Psoas muscle (tissue), 8 donors: ENCODE measurements at regions of chr3 and their contacts with region 1.

Region 1: DNA sequence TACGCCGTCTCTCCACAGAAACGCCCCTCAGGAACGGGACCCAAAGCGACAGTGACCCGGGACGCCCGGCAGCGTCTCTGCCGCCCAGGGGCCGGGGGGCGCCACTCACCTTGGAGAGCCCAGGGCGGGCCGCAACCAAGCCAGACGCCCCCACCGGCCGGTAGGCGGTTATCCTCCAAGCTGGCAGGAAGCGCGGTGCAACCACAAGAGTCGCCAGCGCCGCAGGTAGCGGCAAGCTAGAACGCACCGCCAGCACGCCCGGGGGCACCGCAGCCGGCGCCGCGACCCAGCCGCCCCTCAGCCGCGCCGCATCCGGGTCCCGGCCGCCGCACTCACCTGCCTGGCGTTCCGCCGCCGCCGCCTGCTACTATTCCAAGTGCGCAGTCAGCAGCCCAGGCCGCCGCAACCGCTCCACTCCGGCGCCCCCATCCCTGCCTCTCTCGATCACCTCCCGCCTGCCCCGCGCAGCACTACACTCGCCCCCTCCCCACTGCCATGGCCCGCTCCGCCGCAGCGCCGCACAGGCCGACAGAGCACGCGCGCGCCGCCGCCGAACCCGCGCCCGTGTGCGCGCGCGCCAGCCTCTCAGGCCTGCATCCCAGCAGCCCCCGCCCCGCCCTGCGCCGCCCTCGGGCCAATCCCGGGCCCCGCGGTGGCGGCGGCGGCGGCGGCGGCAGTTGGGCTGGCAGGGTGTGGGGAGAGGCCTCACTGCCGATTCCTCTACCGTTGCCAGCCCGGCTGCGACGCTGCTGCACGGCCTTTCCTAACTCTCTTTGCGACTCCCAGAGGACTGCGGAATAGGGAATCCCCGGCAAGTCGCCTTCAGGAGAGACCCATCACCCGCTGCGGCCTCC is at the start of gene PIK3CB:
- DNase-seq: peak; percentile 93 to 96
- ATAC-seq: peak; percentile 90 to 96 (median 95)
- H3K4me3 ChIP-seq: peak within 1 kb of the TSS; percentile 94
- H3K27ac ChIP-seq: peak within 1 kb of the TSS; percentile 94
- H3K4me1 ChIP-seq: peaks cover 11% of the 10 kb centered on the region
- H3K27me3 ChIP-seq: no peaks in the 10 kb centered on the region
- CTCF ChIP-seq: peak; percentile 37
- total RNA-seq, gene PIK3CB: 14.6 to 46.3 (median 24.5) TPM

Region 2: GRCh38 chr3:138608322-138609135 is 226.1 kb before region 1 on chr3 and contains the start of gene FAIM:
- intact Hi-C with region 1: loop called (anchors 10 kb)
- DNase-seq: peak; percentile 77 to 87
- ATAC-seq: peak; percentile 82 to 85 (median 83)
- H3K4me3 ChIP-seq: peak within 1 kb of the TSS; percentile 85
- H3K27ac ChIP-seq: peak within 1 kb of the TSS; percentile 92
- H3K4me1 ChIP-seq: peaks cover 14% of the 10 kb centered on the region
- H3K27me3 ChIP-seq: no peaks in the 10 kb centered on the region
- CTCF ChIP-seq: no peak
- total RNA-seq, gene FAIM: 2.1 to 3.1 (median 2.3) TPM

Region 3: GRCh38 chr3:138774529-138775253 is 59.9 kb before region 1 on chr3:
- intact Hi-C with region 1: loop called (anchors 1 to 5 kb)
- DNase-seq: no peak
- ATAC-seq: peak; percentile 97 to 98 (median 98)
- H3K4me3 ChIP-seq: peak overlapping the region; percentile 14
- H3K27ac ChIP-seq: peak overlapping the region; percentile 83
- H3K4me1 ChIP-seq: peaks cover 25% of the 10 kb centered on the region
- H3K27me3 ChIP-seq: no peaks in the 10 kb centered on the region
- CTCF ChIP-seq: no peak

Region 4: DNA sequence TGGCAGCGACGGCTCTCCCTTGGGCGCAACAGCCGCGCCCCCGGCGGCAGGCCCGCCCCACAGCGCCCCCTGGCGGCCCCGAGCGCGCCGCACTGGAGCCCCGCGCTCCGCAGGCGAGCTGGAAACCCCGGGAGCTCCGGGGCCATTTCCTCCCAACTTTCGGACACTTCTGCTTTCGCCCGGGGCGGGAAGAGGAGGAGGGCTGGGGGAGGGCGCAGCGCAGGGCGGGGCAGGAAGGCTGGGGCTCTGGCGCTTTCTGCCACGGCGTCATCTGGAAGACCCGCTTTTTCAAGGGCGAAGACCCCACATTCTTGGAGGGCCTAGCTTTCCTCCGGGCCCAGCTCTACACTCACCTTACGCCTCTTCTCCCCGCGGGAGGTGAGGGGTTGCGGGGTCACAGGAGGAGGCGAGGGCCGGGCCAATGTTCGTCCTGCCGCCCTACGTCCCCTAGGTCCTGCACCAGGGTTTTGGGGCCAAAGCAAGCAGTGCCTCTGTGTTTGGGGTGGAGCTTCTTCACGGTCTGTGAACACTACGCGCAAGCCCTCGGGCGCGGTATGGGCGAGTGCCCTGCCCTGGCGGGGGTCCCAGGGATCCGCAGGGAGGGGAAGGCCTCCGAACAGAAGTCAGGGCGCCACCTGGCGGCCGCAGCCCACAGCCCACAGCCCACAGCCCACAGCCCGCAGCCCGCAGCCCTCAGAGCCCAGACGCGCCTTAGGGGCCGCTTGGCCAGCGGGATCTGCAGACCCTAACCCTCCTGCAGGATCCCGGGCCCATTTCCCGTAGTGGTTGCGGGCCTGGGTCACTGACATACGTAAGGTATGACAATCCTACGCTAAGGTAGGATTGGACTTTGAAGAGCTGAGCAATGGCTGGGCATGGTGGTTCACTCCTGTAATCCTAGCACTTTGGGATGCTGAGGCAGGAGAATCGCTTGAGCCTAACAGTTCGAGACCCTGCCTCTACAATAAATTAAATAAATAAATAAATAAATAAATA is 81.2 kb after region 1 on chr3:
- intact Hi-C with region 1: loop called in 1 of 2 experiments (anchors 1 kb)
- DNase-seq: peak; percentile 95 to 98
- ATAC-seq: peak; percentile 96 to 98 (median 97)
- H3K4me3 ChIP-seq: peak overlapping the region; percentile 81
- H3K27ac ChIP-seq: peak overlapping the region; percentile 94
- H3K4me1 ChIP-seq: no peaks in the 10 kb centered on the region
- H3K27me3 ChIP-seq: no peaks in the 10 kb centered on the region
- CTCF ChIP-seq: peak; percentile 98